Activated CD4-positive, alpha-beta T cell treated with anti-CD3 and anti-CD28 coated beads for 36 hours (primary cell): ENCODE measurements at regions of chr16 and their contacts with region 1.

Region 1: GRCh38 chr16:86554917-86555703 is at the start of gene MTHFSD:
- DNase-seq: peak; percentile 97
- ATAC-seq: peak; percentile 95
- H3K4me3 Mint-ChIP-seq: peak within 1 kb of the TSS; percentile 77
- H3K27ac Mint-ChIP-seq: peak within 1 kb of the TSS; percentile 93
- H3K4me1 Mint-ChIP-seq: peaks cover 13% of the 10 kb centered on the region
- H3K27me3 Mint-ChIP-seq: peaks cover 6% of the 10 kb centered on the region
- total RNA-seq, gene MTHFSD: 21.2 to 22.1 TPM

Region 2: GRCh38 chr16:85688586-85689284 is 866.4 kb before region 1 on chr16 and contains the start of gene GINS2:
- CTCF ChIA-PET with region 1: no interaction called
- POLR2A ChIA-PET with region 1: no interaction called
- intact Hi-C with region 1: loop called in 1 of 2 experiments (anchors 10 kb)
- DNase-seq: peak; percentile 96
- ATAC-seq: peak; percentile 100
- H3K4me3 Mint-ChIP-seq: peak within 1 kb of the TSS; percentile 88
- H3K27ac Mint-ChIP-seq: peak within 1 kb of the TSS; percentile 93
- H3K4me1 Mint-ChIP-seq: peaks cover 18% of the 10 kb centered on the region
- H3K27me3 Mint-ChIP-seq: peaks cover 4% of the 10 kb centered on the region
- total RNA-seq, gene GINS2: 86.4 to 87.5 TPM

Region 3: DNA sequence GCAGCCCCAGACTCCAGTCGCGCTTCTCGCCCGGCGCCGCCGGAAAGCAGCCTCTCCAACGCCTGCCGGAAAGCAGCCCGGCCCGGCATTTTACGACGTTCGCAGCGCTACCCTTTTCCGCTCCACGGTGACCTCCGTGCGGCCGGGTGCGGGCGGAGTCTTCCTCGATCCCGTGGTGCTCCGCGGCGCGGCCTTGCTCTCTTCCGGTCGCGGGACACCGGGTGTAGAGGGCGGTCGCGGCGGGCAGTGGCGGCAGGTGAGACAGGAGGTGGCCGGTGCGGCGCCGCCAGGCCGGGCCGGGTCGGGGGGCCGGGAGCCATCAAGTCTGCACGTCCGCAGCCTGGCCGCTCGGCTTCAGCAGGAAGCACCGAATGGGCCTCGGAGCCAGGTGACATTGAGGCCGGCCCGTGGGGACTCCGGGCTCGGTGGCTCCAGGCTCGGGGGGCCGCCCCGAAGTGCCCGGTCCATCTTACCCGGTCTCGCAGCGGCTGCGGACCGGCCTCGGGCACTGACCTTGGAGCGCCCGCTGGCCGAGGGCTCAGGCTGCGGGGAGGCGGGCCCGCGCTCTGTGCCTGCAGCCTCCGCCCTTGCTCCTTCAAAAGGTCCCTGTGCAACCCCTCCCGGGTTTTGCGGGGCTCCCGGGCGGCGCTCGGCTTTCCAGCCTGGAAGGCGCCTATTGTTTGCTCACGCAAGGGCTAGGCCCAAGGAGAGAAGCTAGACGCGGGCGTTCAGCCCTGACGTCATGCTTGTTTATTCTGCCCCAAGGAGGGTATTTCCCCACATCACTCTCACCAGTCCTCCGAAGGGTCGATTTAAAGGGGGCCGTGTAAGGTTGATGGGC is 755.4 kb before region 1 on chr16 and contains the starts of genes COX4I1 and EMC8:
- CTCF ChIA-PET with region 1: no interaction called
- POLR2A ChIA-PET with region 1: no interaction called
- intact Hi-C with region 1: loop called in 1 of 2 experiments (anchors 1 kb)
- DNase-seq: peak; percentile 97
- ATAC-seq: peak; percentile 95
- H3K4me3 Mint-ChIP-seq: peak within 1 kb of the TSS; percentile 85
- H3K27ac Mint-ChIP-seq: peak within 1 kb of the TSS; percentile 89
- H3K4me1 Mint-ChIP-seq: peaks cover 60% of the 10 kb centered on the region
- H3K27me3 Mint-ChIP-seq: no peaks in the 10 kb centered on the region
- total RNA-seq, gene COX4I1: 374 to 508 TPM
- total RNA-seq, gene EMC8: 30.4 to 32.9 TPM

Region 4: DNA sequence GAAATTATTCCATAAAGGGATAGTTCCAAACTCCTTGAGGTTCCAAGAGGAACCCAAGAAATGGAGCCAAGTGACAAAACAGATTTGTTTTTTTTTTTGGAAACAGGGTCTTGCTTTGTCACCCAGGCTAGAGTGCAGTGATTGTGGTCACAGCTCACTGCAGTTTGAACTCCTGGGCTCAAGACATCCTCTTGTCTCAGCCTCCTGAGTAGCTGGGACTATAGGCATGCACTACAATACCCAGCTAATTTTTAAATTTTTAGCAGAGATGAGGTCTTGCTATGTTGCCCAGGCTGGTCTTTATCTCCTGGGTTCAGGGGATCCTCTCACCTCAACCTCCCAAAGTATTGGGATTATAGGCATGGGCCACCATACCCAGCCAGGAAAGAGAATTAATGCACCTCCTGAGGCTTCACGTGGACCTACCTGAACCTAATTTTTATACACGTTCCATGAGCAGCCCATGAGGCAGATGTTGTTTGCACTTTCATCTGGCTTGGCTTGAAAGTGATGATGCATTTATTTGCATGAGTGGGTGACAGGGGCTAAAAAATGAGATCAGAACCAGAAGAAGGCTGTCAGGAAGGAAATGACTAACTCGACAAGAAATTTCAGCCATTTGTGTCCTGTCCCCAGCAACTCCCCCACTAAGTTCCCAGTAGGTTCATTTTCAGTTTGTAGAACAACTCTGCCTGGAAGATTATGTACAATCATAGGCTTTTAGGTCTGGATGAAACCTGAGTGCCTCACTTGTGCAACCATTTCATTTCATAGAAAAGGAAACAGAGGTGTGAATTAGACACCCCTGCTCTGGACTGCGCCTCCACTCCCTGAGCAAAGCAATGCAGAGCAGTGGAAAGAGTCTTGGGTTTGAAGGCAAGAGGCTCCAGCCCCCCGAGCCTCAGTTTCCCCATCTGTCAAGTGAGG is 666.4 kb before region 1 on chr16:
- CTCF ChIA-PET with region 1: no interaction called
- POLR2A ChIA-PET with region 1: no interaction called
- intact Hi-C with region 1: loop called in 1 of 2 experiments (anchors 10 kb)
- DNase-seq: peak; percentile 61
- ATAC-seq: peak; percentile 92
- H3K4me3 Mint-ChIP-seq: peak overlapping the region; percentile 7
- H3K27ac Mint-ChIP-seq: peak overlapping the region; percentile 77
- H3K4me1 Mint-ChIP-seq: peaks cover 39% of the 10 kb centered on the region
- H3K27me3 Mint-ChIP-seq: peaks cover 31% of the 10 kb centered on the region

Region 5: GRCh38 chr16:86609115-86609514 is 54.0 kb after region 1 on chr16:
- CTCF ChIA-PET with region 1: no interaction called
- POLR2A ChIA-PET with region 1: no interaction called
- intact Hi-C with region 1: no loop called
- DNase-seq: no peak
- ATAC-seq: no peak
- H3K4me3 Mint-ChIP-seq: no peak overlapping the region
- H3K27ac Mint-ChIP-seq: no peak overlapping the region
- H3K4me1 Mint-ChIP-seq: peaks cover 7% of the 10 kb centered on the region
- H3K27me3 Mint-ChIP-seq: peaks cover 17% of the 10 kb centered on the region

Region 6: DNA sequence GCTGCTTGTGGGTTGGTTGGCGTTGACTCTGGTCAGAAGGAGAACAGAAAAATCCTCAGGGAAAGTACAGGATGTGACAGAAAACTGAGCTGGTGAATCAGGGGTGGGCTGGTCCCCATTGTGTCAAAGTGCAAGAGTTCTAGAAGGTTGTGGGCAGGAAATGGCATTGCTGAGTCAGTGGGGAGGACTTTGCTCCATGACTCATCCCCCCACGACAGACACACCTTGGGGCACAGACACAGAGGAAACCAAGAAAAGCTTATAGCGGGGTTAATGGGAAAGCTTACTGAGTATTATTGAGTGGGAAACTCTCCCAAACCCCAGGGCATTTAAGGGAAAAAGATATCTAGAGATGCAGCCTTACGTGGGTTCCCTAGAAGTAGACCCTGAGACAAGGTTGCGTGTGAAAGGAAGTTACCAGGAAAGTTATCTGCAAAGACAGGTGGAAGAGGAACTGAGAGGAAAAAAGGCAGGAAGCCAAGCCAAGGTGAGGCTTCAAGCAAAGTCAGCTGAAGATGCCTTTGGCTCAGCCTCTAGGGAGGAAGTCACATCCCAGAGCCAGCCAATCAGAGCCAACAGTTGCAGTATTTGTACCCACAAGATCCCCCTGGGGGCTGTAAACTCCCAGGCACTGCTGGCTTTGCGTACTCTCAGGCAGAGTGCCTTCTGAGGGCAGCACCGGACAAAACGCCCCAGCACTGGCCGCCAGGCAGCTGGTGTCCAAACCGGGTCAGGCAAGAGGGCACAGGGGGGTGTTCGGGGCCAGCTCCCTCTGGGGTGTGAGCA is 109.6 kb after region 1 on chr16:
- CTCF ChIA-PET with region 1: no interaction called
- POLR2A ChIA-PET with region 1: interaction called, 3 read pairs
- intact Hi-C with region 1: loop called in 1 of 2 experiments (anchors 1 kb)
- DNase-seq: peak; percentile 85
- ATAC-seq: peak; percentile 95
- H3K4me3 Mint-ChIP-seq: peak overlapping the region; percentile 21
- H3K27ac Mint-ChIP-seq: peak overlapping the region; percentile 83
- H3K4me1 Mint-ChIP-seq: peaks cover 28% of the 10 kb centered on the region
- H3K27me3 Mint-ChIP-seq: peaks cover 31% of the 10 kb centered on the region

Region 7: GRCh38 chr16:87316923-87317749 is 762.0 kb after region 1 on chr16 and contains the start of gene C16orf95:
- CTCF ChIA-PET with region 1: no interaction called
- POLR2A ChIA-PET with region 1: no interaction called
- intact Hi-C with region 1: loop called in 1 of 2 experiments (anchors 2 kb)
- DNase-seq: peak; percentile 97
- ATAC-seq: peak; percentile 90
- H3K4me3 Mint-ChIP-seq: peak within 1 kb of the TSS; percentile 97
- H3K27ac Mint-ChIP-seq: peak within 1 kb of the TSS; percentile 95
- H3K4me1 Mint-ChIP-seq: peaks cover 11% of the 10 kb centered on the region
- H3K27me3 Mint-ChIP-seq: no peaks in the 10 kb centered on the region
- total RNA-seq, gene C16orf95: 5.6 to 12.8 TPM

Region 8: DNA sequence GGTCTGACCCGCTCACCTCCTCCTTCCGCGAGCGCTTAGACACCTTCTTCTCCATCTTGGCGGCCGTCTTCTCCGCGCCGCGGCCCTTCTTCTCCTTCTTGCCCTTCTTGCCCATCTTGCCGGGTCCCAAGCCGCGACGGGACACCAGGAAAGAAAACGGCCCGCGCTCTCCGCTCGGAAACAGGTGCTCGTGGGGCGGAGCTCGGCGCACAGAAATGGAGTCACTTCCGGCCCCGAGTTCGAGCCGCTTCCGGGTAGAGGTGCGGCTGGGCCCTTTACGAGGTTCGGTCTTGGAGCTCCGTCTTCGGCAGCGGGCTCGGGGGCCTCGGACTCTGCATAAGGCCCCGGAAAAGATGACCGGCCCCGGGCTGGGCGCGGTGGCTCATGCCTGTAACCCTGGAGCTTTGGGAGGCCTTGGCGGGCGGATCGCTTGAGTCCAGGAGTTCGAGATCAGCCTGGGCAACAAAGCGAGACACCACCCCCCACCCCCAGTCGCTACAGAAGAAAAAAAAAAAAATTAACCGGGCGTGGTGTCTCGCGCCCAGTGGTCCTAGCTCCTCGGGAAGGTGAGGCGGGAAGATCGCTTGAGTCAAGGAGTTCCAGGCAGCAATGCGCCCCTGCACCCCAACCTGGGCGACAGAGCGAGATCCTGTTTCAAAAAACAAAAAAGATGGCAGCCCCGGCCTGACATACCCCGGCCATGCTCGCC is 1210.8 kb after region 1 on chr16 and contains the start of gene KLHDC4:
- CTCF ChIA-PET with region 1: no interaction called
- POLR2A ChIA-PET with region 1: no interaction called
- intact Hi-C with region 1: loop called in 1 of 2 experiments (anchors 2 kb)
- DNase-seq: peak; percentile 94
- ATAC-seq: peak; percentile 88
- H3K4me3 Mint-ChIP-seq: peak within 1 kb of the TSS; percentile 100
- H3K27ac Mint-ChIP-seq: peak within 1 kb of the TSS; percentile 99
- H3K4me1 Mint-ChIP-seq: peaks cover 35% of the 10 kb centered on the region
- H3K27me3 Mint-ChIP-seq: no peaks in the 10 kb centered on the region
- total RNA-seq, gene KLHDC4: 67.0 to 77.3 TPM